Sciatic nerve (tissue), 2 donors: ENCODE measurements at regions of chr3 and their contacts with region 1.

Region 1: GRCh38 chr3:73511571-73512525 is 112.9 kb downstream of the PDZRN3 start:
- DNase-seq: no peak
- ATAC-seq: peak; percentile 62

Region 2: DNA sequence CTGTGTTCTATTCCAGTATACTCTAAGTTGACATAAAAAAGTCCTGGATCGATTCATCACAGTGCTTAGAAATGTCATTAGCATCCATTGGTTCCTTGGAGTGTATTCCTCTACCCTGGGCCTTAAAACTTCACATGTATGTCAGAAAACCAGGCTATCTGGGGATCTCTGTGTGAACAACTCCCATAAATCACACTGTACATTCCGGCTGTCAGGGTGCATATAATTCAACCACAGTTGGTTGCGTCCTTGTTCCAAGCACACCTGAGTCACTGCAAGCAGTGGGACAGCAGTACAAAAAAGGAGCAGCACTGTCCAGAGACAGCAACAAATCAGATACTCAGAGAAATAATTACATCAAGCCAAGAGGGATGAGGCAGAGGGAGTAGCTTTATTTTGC is 60.5 kb after region 1 on chr3:
- intact Hi-C with region 1: no loop called
- DNase-seq: no peak
- ATAC-seq: no peak

Region 3: GRCh38 chr3:73624017-73624820 is 112.4 kb after region 1 on chr3:
- intact Hi-C with region 1: no loop called
- DNase-seq: peak; percentile 63
- ATAC-seq: peak; percentile 19

Region 4: DNA sequence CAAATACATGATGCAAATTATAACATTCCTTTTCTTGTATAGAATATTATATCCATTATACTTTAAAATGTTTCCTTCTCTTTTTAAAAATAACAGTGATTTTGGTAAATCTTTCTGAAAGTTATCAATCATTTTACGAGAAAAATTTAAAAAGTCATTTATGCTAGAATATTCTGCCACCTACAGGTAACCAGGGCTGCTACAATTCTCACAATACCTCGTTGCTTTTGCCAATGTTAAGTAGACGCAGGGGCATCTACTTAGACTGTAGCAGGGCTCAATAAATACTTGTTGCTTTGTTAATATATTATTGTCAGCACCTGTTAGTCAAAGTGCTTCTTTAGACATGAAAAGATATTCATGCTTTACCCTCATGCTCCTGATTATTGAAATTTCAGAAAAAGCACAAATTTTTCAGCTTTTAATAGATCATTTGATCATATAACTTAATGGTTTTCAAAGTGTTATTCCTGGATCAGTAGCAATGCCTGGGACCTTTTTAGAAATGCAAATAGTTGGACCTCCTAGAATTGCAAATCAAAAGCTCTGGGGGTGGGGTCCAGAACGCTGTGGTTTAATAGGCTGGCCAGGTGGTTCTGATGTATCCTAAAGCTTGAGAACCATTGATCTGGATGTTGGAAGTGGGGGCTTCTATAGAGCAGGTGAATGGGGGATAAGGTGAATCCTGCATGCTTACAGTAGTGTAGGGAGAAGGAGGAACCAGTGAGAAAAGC is 336.5 kb after region 1 on chr3:
- intact Hi-C with region 1: loop called (anchors 10 kb)
- DNase-seq: no peak
- ATAC-seq: peak; percentile 70